HEK293 (cell line): ENCODE measurements at regions of chr6 and their contacts with region 1.

Region 1: DNA sequence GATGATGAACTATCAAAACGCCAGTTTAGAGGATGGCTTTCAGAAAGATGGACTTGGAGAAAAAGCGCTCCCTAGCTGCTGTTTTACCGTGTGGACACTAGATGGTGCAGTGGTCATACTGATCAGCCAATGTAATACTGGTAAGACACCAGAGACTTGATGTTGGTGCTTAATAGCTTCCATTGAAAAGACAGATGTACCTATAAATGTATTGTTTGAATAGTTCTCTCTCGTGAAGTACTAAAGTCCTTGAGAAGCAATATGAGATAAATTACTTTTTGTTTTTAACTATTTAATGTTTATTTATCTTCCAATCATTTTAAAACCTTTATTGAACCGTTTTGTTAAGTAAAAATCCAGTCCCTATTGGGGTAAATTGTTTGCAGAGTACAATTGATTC is 63.9 kb upstream of the FUCA2 start:
- H3K4me3 ChIP-seq: no peak overlapping the region
- H3K27ac ChIP-seq: no peak overlapping the region
- H3K4me1 ChIP-seq: peaks cover 4% of the 10 kb centered on the region; the same call in 1 of the 2 replicates
- CTCF ChIP-seq: peak; percentile 76

Region 2: GRCh38 chr6:143368426-143368825 is 207.0 kb before region 1 on chr6:
- CTCF ChIA-PET with region 1: no interaction called
- POLR2A ChIA-PET with region 1: no interaction called
- H3K4me3 ChIP-seq: no peak overlapping the region
- H3K27ac ChIP-seq: no peak overlapping the region
- H3K4me1 ChIP-seq: peaks cover 10% of the 10 kb centered on the region; the same call in 1 of the 2 replicates
- CTCF ChIP-seq: no peak

Region 3: DNA sequence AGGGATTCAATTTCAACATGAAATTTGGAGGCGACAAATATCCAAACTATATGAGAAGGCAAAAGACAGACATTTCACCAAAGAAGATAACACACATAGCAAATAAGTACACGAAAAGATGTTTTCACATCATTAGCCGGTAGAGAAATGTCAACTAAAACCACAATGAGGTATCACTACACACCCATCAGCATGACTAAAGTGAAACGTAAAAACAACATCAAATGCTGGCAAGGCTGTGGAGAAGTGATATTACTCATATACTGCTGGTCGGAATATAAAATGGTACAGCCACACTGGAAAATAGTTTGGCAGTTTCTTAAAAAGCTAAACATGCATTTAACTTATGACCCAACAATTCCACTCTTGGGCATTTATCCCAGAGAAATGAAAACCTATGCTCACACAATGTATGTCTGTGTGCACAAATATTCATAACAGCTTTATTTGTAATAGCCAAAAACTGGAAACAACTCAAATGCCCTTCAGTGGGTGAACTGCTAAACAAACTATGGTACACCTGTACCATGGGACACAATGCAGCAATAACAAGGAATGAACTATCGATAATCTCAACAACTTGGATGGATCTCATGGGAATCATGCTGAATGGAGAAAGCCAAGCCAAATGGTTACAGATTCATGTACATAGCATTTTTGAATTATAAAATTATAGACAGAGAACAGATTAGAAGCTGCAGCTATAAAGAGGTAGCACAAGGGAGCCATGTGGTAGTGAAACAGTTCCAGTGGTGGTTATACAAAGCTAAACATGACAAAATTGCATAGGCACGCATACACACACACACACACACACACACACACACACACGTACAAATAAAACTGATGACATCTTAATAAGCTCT is 133.5 kb before region 1 on chr6:
- CTCF ChIA-PET with region 1: no interaction called
- POLR2A ChIA-PET with region 1: no interaction called
- H3K4me3 ChIP-seq: no peak overlapping the region
- H3K27ac ChIP-seq: no peak overlapping the region
- H3K4me1 ChIP-seq: no peaks in the 10 kb centered on the region
- CTCF ChIP-seq: no peak

Region 4: DNA sequence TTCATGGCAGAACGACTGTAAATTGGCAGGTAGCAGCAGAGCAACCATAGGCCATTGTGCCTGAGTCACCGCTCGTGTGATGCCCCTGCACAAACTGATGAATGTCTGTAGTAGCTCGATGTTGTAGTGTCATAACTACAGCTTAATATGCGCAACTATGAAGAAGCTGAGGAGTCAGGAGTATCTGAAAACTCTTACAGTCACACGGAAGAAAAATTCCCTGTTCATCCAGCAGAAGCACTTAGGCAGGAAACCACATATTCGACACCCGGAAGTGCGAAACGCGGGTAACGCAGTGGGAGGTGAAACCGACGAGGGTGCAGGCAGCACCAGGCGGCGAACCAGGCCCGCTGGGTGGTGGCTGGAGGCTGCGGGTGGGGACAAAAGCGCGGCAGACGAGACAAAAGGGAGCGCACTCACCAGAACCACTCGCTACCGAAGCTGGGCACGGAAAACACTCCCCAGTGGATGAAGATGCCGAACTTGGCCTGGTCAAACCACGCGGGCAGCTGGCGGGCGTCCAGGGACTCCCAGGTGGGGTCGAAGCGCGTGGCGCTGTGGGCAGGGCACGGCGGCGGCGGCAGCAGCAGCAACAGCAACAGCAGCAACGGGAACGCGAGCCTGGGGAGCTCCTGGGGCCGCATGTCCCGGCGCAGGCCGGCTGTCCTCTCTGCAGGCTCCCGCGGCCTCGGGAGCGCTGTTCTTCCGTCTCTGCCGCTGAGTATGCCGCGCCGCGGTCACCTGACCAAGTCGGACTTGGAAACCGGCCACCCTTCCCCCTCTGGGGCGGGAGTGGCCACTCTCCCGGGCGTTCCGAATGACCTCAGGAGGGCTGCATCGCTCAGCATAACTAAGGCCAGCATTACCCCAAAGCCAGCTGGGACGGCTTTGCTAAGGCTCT is 64.2 kb before region 1 on chr6 and contains the start of gene FUCA2:
- CTCF ChIA-PET with region 1: interaction called, 15 read pairs
- POLR2A ChIA-PET with region 1: no interaction called
- H3K4me3 ChIP-seq: peak within 1 kb of the TSS; percentile 59
- H3K27ac ChIP-seq: peak within 1 kb of the TSS; percentile 74; the same call in 1 of the 2 replicates
- H3K4me1 ChIP-seq: no peaks in the 10 kb centered on the region
- CTCF ChIP-seq: peak; percentile 86

Region 5: DNA sequence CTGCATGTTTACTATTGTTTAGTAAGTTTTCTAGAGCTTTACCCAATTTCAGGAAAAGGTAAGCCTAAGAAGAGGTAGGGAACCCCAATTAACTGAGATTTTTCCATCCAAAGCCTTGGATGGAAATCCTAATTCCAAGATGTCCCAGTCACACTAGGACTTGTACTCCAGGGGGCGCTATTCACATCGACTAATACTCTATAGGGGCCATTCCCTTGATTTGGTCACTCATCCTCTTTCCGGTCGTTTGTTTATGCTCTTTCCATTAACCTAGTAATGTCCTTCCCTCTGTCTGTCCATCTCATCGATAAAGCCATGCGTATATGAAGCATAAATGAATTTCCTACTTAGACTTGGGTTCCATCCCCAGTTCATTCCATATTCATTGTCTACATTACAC is 16.9 kb after region 1 on chr6:
- CTCF ChIA-PET with region 1: interaction called, 14 read pairs
- POLR2A ChIA-PET with region 1: no interaction called
- H3K4me3 ChIP-seq: no peak overlapping the region
- H3K27ac ChIP-seq: no peak overlapping the region
- H3K4me1 ChIP-seq: no peaks in the 10 kb centered on the region
- CTCF ChIP-seq: no peak

Region 6: DNA sequence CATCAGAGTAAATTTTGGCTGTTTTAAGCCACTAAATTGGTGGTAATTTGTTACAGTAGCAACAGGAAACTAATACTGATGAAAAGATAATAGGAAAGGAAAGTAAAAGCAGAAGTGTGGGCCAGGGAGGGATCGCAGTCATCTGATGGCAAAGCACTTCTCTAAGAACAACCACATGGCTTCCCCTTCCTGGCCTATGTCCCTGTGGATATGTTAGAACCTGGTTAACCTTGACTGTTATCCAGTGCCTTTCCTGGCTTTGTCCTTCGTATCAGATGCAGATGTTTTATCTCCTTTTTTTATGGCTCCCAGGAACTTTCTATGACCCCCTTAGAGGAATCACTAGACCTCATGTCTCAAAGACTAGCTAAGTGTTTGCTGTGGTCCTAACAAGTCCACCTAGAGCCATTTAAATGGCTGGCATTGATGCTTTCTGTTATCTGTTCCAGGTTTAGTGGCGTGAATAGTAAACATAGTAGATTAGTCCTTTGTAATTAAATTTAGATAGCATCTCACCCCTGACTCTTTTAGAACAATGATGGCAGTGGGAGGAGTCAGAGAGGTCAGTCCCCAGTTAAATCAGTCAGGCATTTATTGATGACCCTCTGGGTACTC is 23.1 kb after region 1 on chr6:
- CTCF ChIA-PET with region 1: interaction called, 25 read pairs
- POLR2A ChIA-PET with region 1: no interaction called
- H3K4me3 ChIP-seq: no peak overlapping the region
- H3K27ac ChIP-seq: no peak overlapping the region
- H3K4me1 ChIP-seq: no peaks in the 10 kb centered on the region
- CTCF ChIP-seq: no peak

Region 7: DNA sequence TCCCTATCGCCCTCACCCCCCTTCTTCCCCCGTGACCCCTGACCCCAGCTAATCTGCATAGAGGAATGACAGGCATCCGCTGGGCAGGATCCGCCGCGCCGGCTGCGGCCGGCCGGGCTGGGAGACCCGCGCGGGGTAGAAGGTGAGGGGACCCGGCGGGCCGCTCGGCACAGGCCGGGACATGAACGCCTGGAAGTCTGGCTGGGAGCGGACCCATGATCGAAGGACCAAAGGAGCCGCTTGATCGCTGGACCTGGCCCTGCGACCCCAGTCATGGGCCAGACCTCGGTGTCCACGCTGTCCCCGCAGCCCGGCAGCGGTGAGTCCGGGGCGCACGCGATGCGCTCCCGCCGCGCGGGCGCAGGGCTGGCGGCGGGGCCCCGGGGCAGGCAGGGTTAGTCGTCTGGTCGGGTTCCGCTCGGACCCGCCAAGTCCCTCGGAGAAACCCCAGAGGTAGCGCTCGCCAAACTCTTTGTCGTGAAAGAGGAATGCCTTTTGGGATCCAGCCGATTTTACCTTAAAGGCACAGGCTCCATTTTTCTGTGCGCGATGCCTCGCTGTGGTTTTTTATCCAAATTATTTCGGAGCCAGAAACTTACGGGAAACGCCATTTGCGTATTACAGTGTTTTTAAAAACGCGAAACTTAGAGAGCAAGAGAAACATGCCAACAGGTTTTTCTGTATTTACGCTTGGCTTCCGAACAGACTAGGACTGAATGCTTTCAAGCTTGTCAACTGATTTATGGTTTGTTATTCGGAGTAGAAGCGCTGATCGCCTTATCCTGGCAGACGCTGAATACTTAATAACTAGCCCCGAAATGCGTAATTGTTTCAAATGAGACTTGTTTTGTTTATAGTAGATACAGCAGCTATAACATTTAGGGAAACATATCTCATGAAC is 102.7 kb after region 1 on chr6 and contains the start of gene PHACTR2:
- CTCF ChIA-PET with region 1: interaction called, 10 read pairs
- POLR2A ChIA-PET with region 1: no interaction called
- H3K4me3 ChIP-seq: peak within 1 kb of the TSS; percentile 71
- H3K27ac ChIP-seq: peak within 1 kb of the TSS; percentile 87
- H3K4me1 ChIP-seq: peaks cover 24% of the 10 kb centered on the region; the same call in 1 of the 2 replicates
- CTCF ChIP-seq: no peak

Region 8: GRCh38 chr6:143842902-143843676 is 267.6 kb after region 1 on chr6 and contains the start of gene LTV1:
- CTCF ChIA-PET with region 1: interaction called, 22 read pairs
- POLR2A ChIA-PET with region 1: interaction called, 4 read pairs
- H3K4me3 ChIP-seq: peak within 1 kb of the TSS; percentile 97
- H3K27ac ChIP-seq: peak within 1 kb of the TSS; percentile 72
- H3K4me1 ChIP-seq: no peaks in the 10 kb centered on the region
- CTCF ChIP-seq: no peak

Region 9: GRCh38 chr6:144013486-144013909 is 438.1 kb after region 1 on chr6:
- CTCF ChIA-PET with region 1: interaction called, 110 read pairs
- POLR2A ChIA-PET with region 1: no interaction called
- H3K4me3 ChIP-seq: no peak overlapping the region
- H3K27ac ChIP-seq: no peak overlapping the region
- H3K4me1 ChIP-seq: no peaks in the 10 kb centered on the region
- CTCF ChIP-seq: peak; percentile 65